CD8-positive, alpha-beta T cell (primary cell): ENCODE measurements at regions of chr22 and their contacts with region 1.

Region 1: DNA sequence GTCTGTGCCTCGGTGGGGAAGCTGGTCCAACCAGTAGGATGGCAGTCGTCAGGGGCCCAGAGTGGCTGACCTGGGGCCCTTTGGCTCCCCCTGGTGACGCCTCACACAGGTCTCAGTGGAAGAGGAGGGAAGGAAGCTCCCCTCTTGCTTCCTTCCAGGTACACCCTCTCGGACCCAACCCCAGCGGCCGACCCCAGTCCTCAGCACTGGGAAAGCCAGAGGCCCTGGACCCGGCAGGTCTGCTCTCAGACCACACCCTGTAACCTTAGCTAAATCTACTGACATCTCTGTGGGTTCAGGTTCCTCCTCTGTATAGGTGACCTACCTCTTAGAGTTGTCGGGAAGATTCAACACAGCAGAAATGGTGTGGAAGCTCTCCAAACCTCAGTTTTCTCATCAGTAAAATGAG is 3.4 kb upstream of the SCUBE1 start:
- DNase-seq: peak; percentile 44 to 81 (median 68)
- ATAC-seq: peak; percentile 70
- H3K4me3 ChIP-seq: no peak overlapping the region
- H3K4me3 Mint-ChIP-seq: no peak overlapping the region
- H3K27ac ChIP-seq: no peak overlapping the region
- H3K27ac Mint-ChIP-seq: no peak overlapping the region
- H3K4me1 ChIP-seq: no peaks in the 10 kb centered on the region
- H3K4me1 Mint-ChIP-seq: peaks cover 9% of the 10 kb centered on the region
- H3K27me3 ChIP-seq: peaks cover 0 to 12% of the 10 kb centered on the region in 2 experiments
- H3K27me3 Mint-ChIP-seq: peaks cover 58% of the 10 kb centered on the region
- CTCF ChIP-seq: peak; percentile 69

Region 2: DNA sequence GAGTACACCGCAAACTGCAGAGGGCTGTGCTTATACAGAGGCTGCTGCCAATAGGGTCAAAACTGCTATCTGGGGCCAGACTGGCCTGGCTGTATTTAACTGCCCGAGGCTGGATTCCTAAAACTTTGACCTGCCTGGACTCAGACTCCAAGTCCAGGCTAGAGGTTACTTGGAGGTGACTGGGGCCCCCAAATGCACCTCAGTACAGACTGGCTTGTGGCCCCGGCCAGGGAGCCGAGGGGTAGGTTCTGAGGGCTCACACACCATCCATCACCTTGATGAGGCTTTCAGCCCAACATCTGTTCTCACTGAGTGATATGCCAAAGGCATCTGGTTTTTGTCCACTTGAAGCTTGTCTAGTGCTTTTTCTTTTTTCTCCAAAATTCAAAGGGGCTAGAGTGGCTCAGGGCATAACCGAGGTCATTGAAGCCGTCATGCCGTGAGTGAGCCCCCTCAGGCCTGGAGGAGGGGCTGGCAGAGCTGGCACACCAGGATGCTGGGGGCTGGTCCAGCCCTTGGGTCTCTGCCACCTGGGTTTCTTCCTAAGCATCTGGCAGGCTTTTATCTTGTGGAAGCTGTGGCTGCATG is 107.2 kb before region 1 on chr22:
- CTCF ChIA-PET with region 1: interaction called, 12 read pairs
- POLR2A ChIA-PET with region 1: no interaction called
- intact Hi-C with region 1: no loop called
- DNase-seq: no peak
- ATAC-seq: no peak
- H3K4me3 ChIP-seq: no peak overlapping the region
- H3K4me3 Mint-ChIP-seq: no peak overlapping the region
- H3K27ac ChIP-seq: no peak overlapping the region
- H3K27ac Mint-ChIP-seq: no peak overlapping the region
- H3K4me1 ChIP-seq: no peaks in the 10 kb centered on the region
- H3K4me1 Mint-ChIP-seq: no peaks in the 10 kb centered on the region
- H3K27me3 ChIP-seq: no peaks in the 10 kb centered on the region
- H3K27me3 Mint-ChIP-seq: no peaks in the 10 kb centered on the region
- CTCF ChIP-seq: no peak

Region 3: DNA sequence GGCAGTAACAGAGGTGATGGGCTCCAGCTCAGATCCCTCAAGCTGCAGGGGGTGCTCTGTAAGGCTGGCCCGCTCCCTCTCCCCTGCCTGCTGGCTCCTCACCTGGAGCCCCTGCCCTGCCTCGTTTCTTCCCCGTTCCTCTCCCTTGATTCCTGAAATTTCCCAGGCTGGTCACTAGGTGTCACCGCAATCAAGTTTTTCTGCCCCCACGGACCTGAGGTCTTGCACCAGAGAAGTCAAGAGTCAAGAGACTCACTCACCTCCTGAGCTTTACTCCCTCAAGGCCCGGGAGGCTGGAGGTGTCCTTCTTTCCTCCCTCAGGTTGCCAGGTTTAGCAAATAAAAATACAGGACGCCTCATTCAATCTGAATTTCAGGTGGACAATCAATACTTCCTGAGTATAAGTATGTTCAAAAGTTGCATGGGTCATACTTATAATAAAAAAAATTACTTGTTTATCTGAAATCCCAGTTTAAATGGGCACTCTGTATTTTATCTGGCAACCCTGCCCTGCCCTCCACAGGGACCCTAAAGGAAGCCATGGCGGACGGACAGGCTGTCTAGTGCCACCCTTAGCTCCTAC is 72.5 kb before region 1 on chr22:
- CTCF ChIA-PET with region 1: interaction called, 86 read pairs
- POLR2A ChIA-PET with region 1: interaction called, 4 read pairs
- intact Hi-C with region 1: loop called (anchors 1 kb)
- DNase-seq: peak in 6 of 9 experiments; percentile 25 to 73 (median 46)
- ATAC-seq: peak; percentile 54
- H3K4me3 ChIP-seq: no peak overlapping the region
- H3K4me3 Mint-ChIP-seq: no peak overlapping the region
- H3K27ac ChIP-seq: no peak overlapping the region
- H3K27ac Mint-ChIP-seq: no peak overlapping the region
- H3K4me1 ChIP-seq: no peaks in the 10 kb centered on the region
- H3K4me1 Mint-ChIP-seq: no peaks in the 10 kb centered on the region
- H3K27me3 ChIP-seq: no peaks in the 10 kb centered on the region
- H3K27me3 Mint-ChIP-seq: peaks cover 2% of the 10 kb centered on the region
- CTCF ChIP-seq: peak; percentile 47

Region 4: GRCh38 chr22:43356881-43357280 is 10.4 kb after region 1 on chr22:
- CTCF ChIA-PET with region 1: interaction called, 16 read pairs
- POLR2A ChIA-PET with region 1: no interaction called
- intact Hi-C with region 1: no loop called
- DNase-seq: no peak
- ATAC-seq: no peak
- H3K4me3 ChIP-seq: no peak overlapping the region
- H3K4me3 Mint-ChIP-seq: no peak overlapping the region
- H3K27ac ChIP-seq: no peak overlapping the region
- H3K27ac Mint-ChIP-seq: no peak overlapping the region
- H3K4me1 ChIP-seq: no peaks in the 10 kb centered on the region
- H3K4me1 Mint-ChIP-seq: no peaks in the 10 kb centered on the region
- H3K27me3 ChIP-seq: no peaks in the 10 kb centered on the region
- H3K27me3 Mint-ChIP-seq: peaks cover 8% of the 10 kb centered on the region
- CTCF ChIP-seq: no peak

Region 5: DNA sequence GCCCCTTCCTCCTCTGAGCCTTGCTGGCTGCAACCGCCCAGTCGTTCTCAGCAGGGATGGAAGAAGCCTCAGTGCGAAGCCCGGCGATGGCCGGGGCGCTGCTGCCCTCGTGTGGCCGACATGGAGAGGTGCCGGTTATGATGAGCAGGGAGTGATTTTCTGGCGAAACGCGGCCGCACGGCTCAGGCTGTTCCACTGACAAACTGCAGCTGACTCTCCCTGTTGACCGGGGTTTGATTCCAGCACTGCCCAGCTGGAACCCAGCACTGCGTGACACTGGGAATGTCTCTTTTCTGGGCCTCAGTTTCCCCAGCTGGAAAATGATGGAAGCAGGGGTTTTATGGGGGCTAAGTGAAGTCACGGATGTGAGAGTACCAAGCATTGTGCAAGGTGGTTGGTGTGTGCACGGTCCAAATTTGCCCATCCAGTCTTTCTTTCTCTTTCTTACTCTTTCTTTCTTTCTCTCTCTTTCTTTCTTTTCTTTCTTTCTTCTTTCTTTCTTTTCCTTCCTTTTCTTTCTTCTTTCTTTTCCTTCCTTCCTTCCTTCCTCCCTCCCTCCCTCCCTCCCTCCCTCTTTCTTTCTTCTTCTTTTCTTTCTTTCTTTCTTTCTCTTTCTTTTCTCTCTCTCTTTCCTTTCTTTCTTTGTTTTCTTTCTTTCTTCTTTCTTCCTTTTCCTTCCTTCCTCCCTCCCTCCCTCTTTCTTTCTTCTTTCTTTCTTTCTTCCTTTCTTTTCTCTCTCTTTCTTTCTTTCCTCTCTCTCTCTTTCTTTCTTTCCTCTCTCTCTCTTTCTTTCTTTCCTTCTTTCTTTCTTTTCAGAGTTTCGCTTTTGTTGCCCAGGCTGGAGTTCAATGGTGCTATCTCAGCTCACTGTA is 39.5 kb after region 1 on chr22:
- CTCF ChIA-PET with region 1: interaction called, 18 read pairs
- POLR2A ChIA-PET with region 1: no interaction called
- intact Hi-C with region 1: loop called in 1 of 2 experiments (anchors 2 kb)
- DNase-seq: peak; percentile 46 to 85 (median 73)
- ATAC-seq: peak; percentile 82
- H3K4me3 ChIP-seq: no peak overlapping the region
- H3K4me3 Mint-ChIP-seq: no peak overlapping the region
- H3K27ac ChIP-seq: no peak overlapping the region
- H3K27ac Mint-ChIP-seq: no peak overlapping the region
- H3K4me1 ChIP-seq: peaks cover 4% of the 10 kb centered on the region
- H3K4me1 Mint-ChIP-seq: peaks cover 7% of the 10 kb centered on the region
- H3K27me3 ChIP-seq: peaks cover 7 to 14% of the 10 kb centered on the region in 2 experiments
- H3K27me3 Mint-ChIP-seq: peaks cover 18% of the 10 kb centered on the region
- CTCF ChIP-seq: peak; percentile 58

Region 6: DNA sequence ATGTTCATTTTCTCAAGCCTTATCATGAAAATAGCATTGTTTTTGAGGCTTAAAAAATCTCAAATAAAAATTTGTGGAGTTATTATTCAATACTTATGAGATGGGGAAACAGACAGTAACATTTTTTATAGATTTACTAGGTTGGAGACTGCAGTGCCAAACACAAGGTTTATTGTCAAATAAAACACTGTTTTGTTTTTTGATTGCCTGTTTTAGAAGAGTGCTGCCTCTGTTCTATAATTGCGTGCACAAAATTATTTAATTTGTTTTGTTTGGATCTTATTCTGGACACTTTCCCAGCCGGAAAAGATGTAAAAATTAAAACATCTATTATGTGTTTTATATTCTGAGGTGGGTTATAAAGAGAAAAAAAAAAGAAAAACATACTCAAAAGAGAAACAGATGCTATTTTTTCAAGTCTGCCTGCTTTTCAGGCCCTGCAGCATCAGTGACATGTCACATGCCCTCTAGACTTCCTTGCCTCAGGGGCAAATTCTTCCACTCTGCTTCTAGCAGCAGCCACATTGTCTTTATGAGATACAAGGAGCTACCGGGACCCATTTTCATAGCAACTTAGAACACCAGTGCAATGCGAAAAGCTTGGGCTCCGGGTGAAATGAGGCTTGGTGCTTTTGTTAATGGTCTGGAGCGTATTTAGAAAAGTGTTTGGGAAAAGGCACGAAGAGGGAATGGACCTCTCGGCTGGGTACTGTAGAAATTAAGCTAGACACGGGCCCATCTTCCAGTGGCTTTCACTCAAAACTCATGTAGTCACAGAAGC is 388.0 kb after region 1 on chr22:
- CTCF ChIA-PET with region 1: no interaction called
- POLR2A ChIA-PET with region 1: no interaction called
- intact Hi-C with region 1: no loop called
- DNase-seq: no peak
- ATAC-seq: no peak
- H3K4me3 ChIP-seq: no peak overlapping the region
- H3K4me3 Mint-ChIP-seq: no peak overlapping the region
- H3K27ac ChIP-seq: no peak overlapping the region
- H3K27ac Mint-ChIP-seq: no peak overlapping the region
- H3K4me1 ChIP-seq: no peaks in the 10 kb centered on the region
- H3K4me1 Mint-ChIP-seq: no peaks in the 10 kb centered on the region
- H3K27me3 ChIP-seq: no peaks in the 10 kb centered on the region
- H3K27me3 Mint-ChIP-seq: peaks cover 4% of the 10 kb centered on the region
- CTCF ChIP-seq: no peak